ENCODE measurements at regions of chr15 and their contacts with region 1.

Region 1: DNA sequence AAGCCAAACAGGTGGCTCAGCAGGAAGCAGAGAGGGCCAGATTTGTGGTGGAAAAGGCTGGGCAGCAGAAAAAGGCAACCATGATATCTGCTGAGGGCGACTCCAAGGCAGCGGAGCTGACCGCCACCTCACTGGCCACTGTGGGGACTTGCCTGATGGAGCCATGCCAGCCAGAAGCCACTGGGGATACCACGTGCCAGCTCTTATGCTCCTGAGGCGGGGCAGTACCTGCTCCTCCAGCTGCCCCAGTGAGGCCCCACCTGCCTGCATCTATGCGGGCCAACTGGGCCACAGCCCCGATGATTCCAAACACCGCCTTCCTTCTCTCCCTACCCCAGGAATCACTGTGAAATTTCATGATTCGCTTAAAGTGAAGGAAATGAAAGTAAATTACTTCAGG is 22.9 kb upstream of the ARIH1 start:
- DNase-seq: no peak
- H3K4me3 ChIP-seq: no peak overlapping the region
- H3K27ac ChIP-seq: no peak overlapping the region
- H3K4me1 ChIP-seq: no peaks in the 10 kb centered on the region
- H3K27me3 ChIP-seq: no peaks in the 10 kb centered on the region
- CTCF ChIP-seq: no peak
- EP300 ChIP-seq: no peak
- POLR2A ChIP-seq: no peak
- RAD21 ChIP-seq: no peak

Region 2: GRCh38 chr15:72242775-72243370 is 208.4 kb before region 1 on chr15:
- CTCF ChIA-PET with region 1: no interaction called
- POLR2A ChIA-PET with region 1: no interaction called
- DNase-seq: no peak
- H3K4me3 ChIP-seq: no peak overlapping the region
- H3K27ac ChIP-seq: no peak overlapping the region
- H3K4me1 ChIP-seq: peaks cover 0 to 7% (median 0%) of the 10 kb centered on the region in 4 experiments; a peak in 2 of 7 replicates
- H3K27me3 ChIP-seq: peaks cover 25 to 65% (median 51%) of the 10 kb centered on the region in 4 experiments
- CTCF ChIP-seq: no peak
- EP300 ChIP-seq: peak in 1 of 2 experiments; percentile 53; a peak in 1 of 3 replicates
- POLR2A ChIP-seq: no peak
- RAD21 ChIP-seq: no peak

Region 3: DNA sequence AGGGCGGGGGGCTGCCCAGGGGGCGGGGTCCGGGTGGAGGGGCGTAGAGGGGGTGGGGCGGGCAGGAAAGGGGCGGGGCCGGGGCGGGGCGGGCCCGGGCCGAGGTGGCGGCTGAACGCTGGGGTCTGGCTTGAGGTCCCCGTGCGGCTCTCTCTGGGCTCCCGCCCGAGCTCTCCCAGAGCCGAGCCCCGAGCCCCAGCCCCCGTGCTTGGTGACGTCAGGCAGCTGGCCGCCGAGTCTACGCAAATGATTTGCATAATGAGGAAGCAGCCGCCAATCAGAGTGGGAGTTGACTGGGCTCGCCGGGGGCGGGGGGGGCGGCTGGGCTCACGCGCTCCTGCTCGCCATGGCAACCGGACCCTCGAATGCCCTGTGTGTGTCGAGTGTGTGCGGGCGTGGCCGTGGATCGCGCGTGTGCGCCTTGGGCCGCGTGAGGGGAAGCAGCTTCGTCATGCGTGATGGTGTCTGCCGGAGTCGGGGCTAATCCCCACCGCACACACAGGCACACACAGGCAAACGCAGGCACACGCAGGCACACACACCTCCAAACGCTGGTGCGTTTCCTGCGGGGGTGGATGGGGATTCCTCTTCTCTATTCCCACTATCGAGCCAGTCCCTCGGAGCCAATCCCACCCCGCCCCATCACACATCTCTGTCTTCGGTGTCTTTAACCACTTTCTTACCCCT is 131.1 kb before region 1 on chr15 and contains the start of gene CELF6:
- CTCF ChIA-PET with region 1: no interaction called
- POLR2A ChIA-PET with region 1: no interaction called
- DNase-seq: peak; percentile 73 to 92
- H3K4me3 ChIP-seq: peak within 1 kb of the TSS; percentile 33 to 65 (median 56)
- H3K27ac ChIP-seq: peak within 1 kb of the TSS; percentile 61
- H3K4me1 ChIP-seq: peaks cover 0 to 4% (median 0%) of the 10 kb centered on the region in 4 experiments; a peak in 1 of 7 replicates
- H3K27me3 ChIP-seq: peaks cover 5 to 26% (median 21%) of the 10 kb centered on the region in 4 experiments
- CTCF ChIP-seq: no peak
- EP300 ChIP-seq: no peak
- POLR2A ChIP-seq: no peak
- RAD21 ChIP-seq: no peak
- total RNA-seq, gene CELF6: 0.19 TPM in 1 of 2 replicates, not detected in the other

Region 4: DNA sequence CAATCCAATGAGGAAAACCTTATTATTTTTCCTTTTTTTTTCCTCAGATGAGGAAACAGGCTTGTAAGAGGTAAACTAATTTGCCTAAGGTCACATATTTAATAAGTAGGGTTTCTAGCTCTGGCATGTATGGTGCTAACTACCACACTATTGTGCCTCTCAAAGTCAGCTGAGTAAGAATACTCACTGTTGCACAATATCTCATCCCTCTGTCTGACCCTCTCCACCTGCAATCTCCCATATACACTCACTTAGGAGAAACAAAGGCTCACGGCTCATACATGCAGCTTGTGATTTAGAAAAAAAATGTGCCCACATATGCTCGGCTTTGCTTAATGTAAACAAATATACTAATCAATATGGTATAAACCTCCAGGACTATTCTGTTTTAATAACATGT is 12.5 kb after region 1 on chr15:
- CTCF ChIA-PET with region 1: interaction called, 13 read pairs
- POLR2A ChIA-PET with region 1: interaction called, 3 read pairs
- DNase-seq: no peak
- H3K4me3 ChIP-seq: no peak overlapping the region
- H3K27ac ChIP-seq: no peak overlapping the region
- H3K4me1 ChIP-seq: no peaks in the 10 kb centered on the region
- H3K27me3 ChIP-seq: no peaks in the 10 kb centered on the region
- CTCF ChIP-seq: no peak
- EP300 ChIP-seq: no peak
- POLR2A ChIP-seq: no peak
- RAD21 ChIP-seq: no peak

Measured in H1 (cell line).